H1 (cell line): ENCODE measurements at regions of chr13 and their contacts with region 1.

Region 1: GRCh38 chr13:103031332-103031873 is 34.8 kb downstream of the SLC10A2 start:
- DNase-seq: no peak
- H3K4me3 ChIP-seq: no peak overlapping the region
- H3K27ac ChIP-seq: no peak overlapping the region
- H3K4me1 ChIP-seq: no peaks in the 10 kb centered on the region
- H3K27me3 ChIP-seq: no peaks in the 10 kb centered on the region
- CTCF ChIP-seq: no peak
- EP300 ChIP-seq: no peak
- POLR2A ChIP-seq: no peak
- RAD21 ChIP-seq: no peak

Region 2: DNA sequence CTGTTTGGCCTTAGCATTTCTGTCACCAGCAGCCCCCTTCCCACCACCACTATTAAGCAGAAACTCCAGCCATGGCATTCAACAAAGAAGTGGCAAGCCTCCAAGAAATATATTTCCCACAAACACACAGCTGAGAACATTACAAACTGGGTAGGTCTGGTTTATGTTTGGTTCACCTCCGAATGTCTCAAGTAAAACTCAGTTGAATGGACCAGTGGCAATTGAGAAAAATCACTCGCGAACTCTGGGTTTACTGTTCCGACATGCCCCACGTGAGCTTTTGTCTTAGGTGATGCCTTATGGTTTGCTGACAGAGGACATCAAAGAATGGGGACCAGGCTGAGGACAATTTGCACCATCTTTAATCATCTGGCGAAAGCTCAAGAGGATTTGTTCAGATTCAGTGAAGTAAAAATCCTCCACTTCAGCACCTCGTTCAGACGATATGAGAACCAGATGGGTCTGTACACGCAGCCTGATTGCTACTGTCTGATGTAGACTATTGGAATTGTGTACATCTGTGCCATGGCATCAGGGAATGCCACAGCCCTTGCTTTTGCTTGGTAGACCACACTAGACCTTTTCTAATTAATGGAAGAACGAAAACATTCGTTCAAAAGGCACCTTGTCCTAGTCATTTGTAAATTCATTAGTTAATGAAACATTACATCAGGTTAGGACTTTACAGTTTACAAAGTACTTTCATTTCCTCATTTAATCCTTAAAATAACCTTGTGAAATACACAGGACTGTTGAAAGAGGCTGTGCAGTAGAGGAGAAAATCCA is 24.6 kb before region 1 on chr13:
- CTCF ChIA-PET with region 1: no interaction called
- POLR2A ChIA-PET with region 1: no interaction called
- DNase-seq: no peak
- H3K4me3 ChIP-seq: no peak overlapping the region
- H3K27ac ChIP-seq: no peak overlapping the region
- H3K4me1 ChIP-seq: no peaks in the 10 kb centered on the region
- H3K27me3 ChIP-seq: peaks cover 0 to 1% (median 0%) of the 10 kb centered on the region in 4 experiments; a peak in 1 of 7 replicates
- CTCF ChIP-seq: no peak
- EP300 ChIP-seq: no peak
- POLR2A ChIP-seq: no peak
- RAD21 ChIP-seq: no peak

Region 3: GRCh38 chr13:103044056-103044455 is 12.7 kb after region 1 on chr13:
- CTCF ChIA-PET with region 1: interaction called, 12 read pairs
- POLR2A ChIA-PET with region 1: no interaction called
- DNase-seq: no peak
- H3K4me3 ChIP-seq: no peak overlapping the region
- H3K27ac ChIP-seq: no peak overlapping the region
- H3K4me1 ChIP-seq: no peaks in the 10 kb centered on the region
- H3K27me3 ChIP-seq: no peaks in the 10 kb centered on the region
- CTCF ChIP-seq: no peak
- EP300 ChIP-seq: no peak
- POLR2A ChIP-seq: no peak
- RAD21 ChIP-seq: no peak